Breast epithelium (tissue), 4 donors: ENCODE measurements at regions of chrX and their contacts with region 1.

Region 1: DNA sequence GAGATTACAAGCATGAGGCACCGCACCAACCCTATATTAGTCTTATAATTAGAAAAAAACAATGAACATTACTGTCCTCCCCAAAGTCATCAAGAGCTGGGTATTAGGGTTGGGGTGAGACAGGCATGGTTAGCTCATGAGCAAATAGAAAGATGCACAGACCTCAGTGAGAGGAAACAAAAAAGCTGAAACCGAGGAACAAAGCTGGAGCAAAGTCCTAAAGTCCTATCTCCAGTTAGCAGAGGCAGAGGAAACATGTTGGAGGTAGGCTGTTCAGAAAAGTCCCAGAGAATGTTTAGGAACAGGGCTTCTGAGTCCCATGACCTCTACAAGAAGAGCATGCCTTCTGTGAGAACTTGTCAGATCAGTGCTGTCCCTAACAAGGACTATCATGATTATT is 4.6 kb upstream of the PCYT1B start:
- DNase-seq: no peak
- H3K4me3 ChIP-seq: no peak overlapping the region
- H3K27ac ChIP-seq: no peak overlapping the region
- H3K4me1 ChIP-seq: no peaks in the 10 kb centered on the region
- H3K27me3 ChIP-seq: peaks cover 0 to 21% of the 10 kb centered on the region in 2 donors
- CTCF ChIP-seq: no peak
- POLR2A ChIP-seq: no peak

Region 2: GRCh38 chrX:24676403-24677024 is 24.7 kb after region 1 on chrX:
- intact Hi-C with region 1: loop called (anchors 2 kb)
- DNase-seq: no peak
- H3K4me3 ChIP-seq: no peak overlapping the region
- H3K27ac ChIP-seq: no peak overlapping the region
- H3K4me1 ChIP-seq: no peaks in the 10 kb centered on the region
- H3K27me3 ChIP-seq: peaks cover 0 to 24% of the 10 kb centered on the region in 2 donors
- CTCF ChIP-seq: no peak
- POLR2A ChIP-seq: no peak